ENCODE measurements at regions of chr17 and their contacts with region 1.

Region 1: DNA sequence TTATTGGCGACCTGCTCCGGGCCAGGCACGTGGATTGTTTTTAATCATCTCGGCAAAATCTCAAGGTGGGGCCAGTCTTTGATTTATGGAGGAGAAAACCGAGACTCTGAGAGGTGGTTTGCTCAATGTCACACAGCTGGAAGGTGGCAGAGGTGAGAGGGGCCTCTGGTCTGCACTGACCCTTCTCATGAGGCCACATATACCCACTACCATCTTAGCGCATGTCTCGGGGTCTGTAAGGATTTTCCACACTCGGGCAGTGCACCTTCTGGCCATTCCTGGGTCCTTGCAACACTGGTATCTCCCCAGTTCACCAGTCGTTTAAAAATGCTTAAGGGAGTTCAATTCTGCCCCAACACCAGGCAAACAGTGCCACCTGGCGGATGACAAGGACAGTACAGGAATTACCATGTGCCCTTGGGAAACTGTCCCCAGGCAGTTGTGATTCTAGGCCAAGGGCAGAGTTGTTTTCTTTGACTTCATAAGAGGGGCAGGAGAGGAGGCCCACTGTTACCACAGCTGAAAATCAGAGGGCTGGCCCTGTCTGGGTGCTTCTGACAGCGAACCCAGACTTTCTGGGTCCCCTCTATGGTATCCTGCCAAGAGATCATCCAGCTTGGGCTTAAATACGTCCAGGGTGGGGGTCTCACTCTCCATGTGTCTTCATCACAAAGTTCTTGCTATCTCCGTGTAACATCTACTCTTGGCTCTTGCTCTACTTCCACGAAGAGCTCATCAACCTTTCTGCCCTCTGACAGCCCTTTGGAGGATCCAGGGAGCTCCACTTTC is 39.4 kb upstream of the RAI1 start:
- H3K4me3 Mint-ChIP-seq: no peak overlapping the region
- H3K27ac Mint-ChIP-seq: no peak overlapping the region
- H3K4me1 Mint-ChIP-seq: peaks cover 25% of the 10 kb centered on the region
- H3K27me3 Mint-ChIP-seq: peaks cover 7% of the 10 kb centered on the region

Region 2: GRCh38 chr17:17568749-17569195 is 73.0 kb before region 1 on chr17:
- intact Hi-C with region 1: no loop called
- H3K4me3 Mint-ChIP-seq: no peak overlapping the region
- H3K27ac Mint-ChIP-seq: no peak overlapping the region
- H3K4me1 Mint-ChIP-seq: peaks cover 7% of the 10 kb centered on the region
- H3K27me3 Mint-ChIP-seq: no peaks in the 10 kb centered on the region

Region 3: GRCh38 chr17:17591355-17592298 is 50.2 kb before region 1 on chr17 and contains the start of gene PEMT:
- intact Hi-C with region 1: loop called (anchors 5 kb)
- H3K4me3 Mint-ChIP-seq: peak within 1 kb of the TSS; percentile 82
- H3K27ac Mint-ChIP-seq: peak within 1 kb of the TSS; percentile 88
- H3K4me1 Mint-ChIP-seq: peaks cover 26% of the 10 kb centered on the region
- H3K27me3 Mint-ChIP-seq: no peaks in the 10 kb centered on the region

Region 4: GRCh38 chr17:17694169-17695081 is 52.6 kb after region 1 on chr17:
- intact Hi-C with region 1: no loop called
- H3K4me3 Mint-ChIP-seq: peak overlapping the region; percentile 75
- H3K27ac Mint-ChIP-seq: peak overlapping the region; percentile 92
- H3K4me1 Mint-ChIP-seq: peaks cover 73% of the 10 kb centered on the region
- H3K27me3 Mint-ChIP-seq: peaks cover 6% of the 10 kb centered on the region

Region 5: DNA sequence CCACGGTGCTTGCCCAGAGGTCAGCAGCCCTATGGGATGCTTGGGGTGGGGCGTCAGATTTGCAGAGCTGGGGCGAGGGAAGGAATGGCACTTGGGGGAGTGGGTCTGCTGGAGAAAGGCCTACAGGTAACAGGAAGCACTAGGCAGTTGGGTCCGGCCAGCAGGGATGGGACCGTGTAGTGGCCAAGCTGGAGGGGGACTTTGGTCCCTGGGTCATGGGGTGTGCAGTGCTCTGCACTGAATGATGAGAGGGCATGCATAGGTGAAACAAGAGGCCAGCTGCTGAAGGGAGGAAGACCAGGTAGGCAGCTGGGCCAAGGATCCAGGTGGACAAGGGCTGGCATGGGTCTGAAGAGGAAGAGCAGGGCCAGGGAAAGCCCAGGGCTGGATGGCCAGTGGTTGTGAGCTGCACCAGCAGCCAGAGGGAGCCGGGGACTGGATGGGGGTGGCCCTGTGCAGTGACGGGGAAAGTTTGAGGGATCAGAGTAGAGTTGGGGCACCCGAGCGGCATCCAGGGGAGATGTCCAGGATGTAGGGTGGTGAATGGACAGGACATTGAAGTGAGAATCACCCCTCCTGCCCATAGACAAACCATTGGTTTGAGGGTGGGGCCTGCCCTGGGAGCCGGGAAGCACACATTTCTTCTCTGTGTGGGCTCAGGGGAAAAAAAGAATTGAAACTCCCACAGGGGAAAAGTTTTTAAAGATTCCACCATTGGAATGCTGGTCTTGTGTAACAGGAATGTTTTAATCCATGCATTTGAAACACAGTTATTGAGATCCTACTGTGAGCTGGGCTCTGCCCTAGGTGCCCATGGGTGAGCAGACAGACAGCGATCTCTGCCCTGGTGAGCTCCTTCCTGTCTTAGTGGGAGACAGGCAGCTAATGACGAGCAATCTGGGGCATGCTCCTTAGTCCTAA is 64.6 kb after region 1 on chr17:
- intact Hi-C with region 1: no loop called
- H3K4me3 Mint-ChIP-seq: no peak overlapping the region
- H3K27ac Mint-ChIP-seq: no peak overlapping the region
- H3K4me1 Mint-ChIP-seq: peaks cover 51% of the 10 kb centered on the region
- H3K27me3 Mint-ChIP-seq: peaks cover 1% of the 10 kb centered on the region

Region 6: DNA sequence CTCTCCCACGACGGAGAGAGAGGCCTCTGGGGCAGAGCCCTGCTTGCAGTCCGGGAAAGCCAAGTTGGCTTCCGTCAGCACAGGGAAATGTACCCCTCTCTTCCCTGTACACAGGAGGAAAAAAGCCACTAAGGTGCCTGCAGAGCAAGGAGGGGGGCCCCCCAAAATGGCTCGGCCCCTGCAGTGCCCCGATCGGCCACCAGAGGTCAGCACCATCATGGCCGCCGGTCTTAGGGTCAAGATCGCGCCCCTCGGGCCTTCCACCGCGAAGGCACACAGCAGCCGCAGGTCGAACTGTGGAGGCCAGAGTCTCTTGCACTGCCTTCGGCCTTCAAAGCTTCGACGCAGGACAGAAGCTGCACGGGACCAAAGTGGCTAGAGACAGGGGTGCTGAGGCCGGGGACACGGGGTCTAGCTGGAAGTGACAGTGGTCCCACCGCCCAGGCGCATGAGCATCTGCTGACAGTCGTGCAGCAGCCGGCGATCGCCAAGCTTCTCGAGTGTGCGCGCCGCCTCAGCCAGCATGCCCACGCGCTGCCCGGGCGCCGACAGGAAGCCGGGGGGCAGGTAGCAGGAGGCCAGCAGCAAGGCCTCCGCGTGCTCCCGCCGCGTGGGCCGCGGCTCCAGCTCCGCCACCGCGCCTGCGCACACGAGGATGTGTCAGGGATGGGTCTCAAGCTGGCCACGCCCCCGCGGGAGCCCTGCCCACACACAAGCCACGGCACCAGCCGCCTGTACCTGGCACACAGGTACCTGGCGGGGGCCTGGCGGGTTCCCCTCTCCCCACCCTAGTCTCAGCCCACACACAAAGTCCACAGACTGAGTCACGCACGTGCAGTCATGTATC is 170.6 kb after region 1 on chr17:
- intact Hi-C with region 1: no loop called
- H3K4me3 Mint-ChIP-seq: no peak overlapping the region
- H3K27ac Mint-ChIP-seq: no peak overlapping the region
- H3K4me1 Mint-ChIP-seq: peaks cover 13% of the 10 kb centered on the region
- H3K27me3 Mint-ChIP-seq: no peaks in the 10 kb centered on the region

Measured in dendritic cell treated with granulocyte-macrophage colony-stimulating factor and Interleukin-4, amounts not matched to agents 40 ng/mL and 50 ng/mL, for 4 days (primary cell).